Ovary (tissue), 10 donors: ENCODE measurements at regions of chr12 and their contacts with region 1.

Region 1: DNA sequence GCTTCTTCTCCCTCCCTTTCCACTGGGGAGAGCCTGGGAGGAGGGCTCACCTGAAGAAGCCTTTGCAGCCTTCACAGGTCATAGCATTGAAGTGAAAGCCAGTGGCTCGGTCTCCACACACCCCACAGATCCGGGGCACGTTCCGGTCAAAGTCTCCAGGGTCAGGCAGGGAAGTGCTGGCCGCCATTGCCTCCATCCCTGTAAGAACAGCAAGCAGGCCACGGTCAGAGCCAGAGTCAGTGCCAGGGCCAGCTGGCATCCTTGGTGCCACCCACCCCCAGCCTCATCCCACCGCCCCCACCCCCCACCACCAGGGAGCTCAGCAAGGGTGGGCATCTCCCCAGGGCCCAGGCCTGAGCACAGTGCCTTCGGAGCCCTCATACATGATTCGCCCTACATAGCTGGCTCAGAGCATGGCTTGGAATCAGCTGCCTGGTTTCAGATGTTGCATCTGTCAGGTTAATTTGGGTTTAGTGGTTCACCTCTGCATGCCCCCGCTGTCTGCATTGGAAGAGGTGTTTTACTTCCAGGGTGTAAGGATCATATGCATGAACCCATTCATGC is 25.8 kb downstream of the VDR start:
- DNase-seq: no peak
- H3K4me3 ChIP-seq: no peak overlapping the region
- H3K27ac ChIP-seq: no peak overlapping the region
- H3K4me1 ChIP-seq: no peaks in the 10 kb centered on the region
- H3K27me3 ChIP-seq: no peaks in the 10 kb centered on the region
- CTCF ChIP-seq: no peak
- EP300 ChIP-seq: no peak
- POLR2A ChIP-seq: no peak

Region 2: DNA sequence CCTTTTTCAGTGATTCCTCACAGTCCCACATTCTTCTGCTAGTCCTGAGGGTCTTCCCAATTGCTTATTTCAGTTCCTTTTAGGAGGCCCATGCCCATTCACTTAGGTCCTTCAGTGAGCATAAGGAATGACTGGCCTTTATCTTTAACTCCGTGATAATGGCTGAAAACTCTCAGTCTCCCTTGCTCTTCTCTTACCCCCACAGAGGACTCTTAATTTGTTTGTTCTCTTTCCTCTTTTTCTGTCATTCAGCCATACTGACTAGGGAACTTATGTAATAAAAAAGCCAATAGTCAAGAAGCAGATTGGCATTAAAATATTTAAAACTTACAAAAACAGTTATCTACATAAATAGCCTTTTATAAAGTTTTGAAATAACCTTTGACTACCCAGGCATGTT is 42.9 kb after region 1 on chr12:
- intact Hi-C with region 1: loop called in 1 of 4 experiments (anchors 2 kb)
- DNase-seq: no peak
- H3K4me3 ChIP-seq: no peak overlapping the region
- H3K27ac ChIP-seq: no peak overlapping the region
- H3K4me1 ChIP-seq: no peaks in the 10 kb centered on the region
- H3K27me3 ChIP-seq: no peaks in the 10 kb centered on the region
- CTCF ChIP-seq: no peak
- EP300 ChIP-seq: no peak
- POLR2A ChIP-seq: no peak